ENCODE measurements at regions of chr17 and their contacts with region 1.

Region 1: GRCh38 chr17:63966646-63967264 is 6.0 kb downstream of the SCN4A start:
- DNase-seq: no peak
- H3K4me3 ChIP-seq: no peak overlapping the region
- H3K27ac ChIP-seq: no peak overlapping the region
- H3K4me1 ChIP-seq: no peaks in the 10 kb centered on the region
- H3K27me3 ChIP-seq: no peaks in the 10 kb centered on the region
- CTCF ChIP-seq: no peak

Region 2: DNA sequence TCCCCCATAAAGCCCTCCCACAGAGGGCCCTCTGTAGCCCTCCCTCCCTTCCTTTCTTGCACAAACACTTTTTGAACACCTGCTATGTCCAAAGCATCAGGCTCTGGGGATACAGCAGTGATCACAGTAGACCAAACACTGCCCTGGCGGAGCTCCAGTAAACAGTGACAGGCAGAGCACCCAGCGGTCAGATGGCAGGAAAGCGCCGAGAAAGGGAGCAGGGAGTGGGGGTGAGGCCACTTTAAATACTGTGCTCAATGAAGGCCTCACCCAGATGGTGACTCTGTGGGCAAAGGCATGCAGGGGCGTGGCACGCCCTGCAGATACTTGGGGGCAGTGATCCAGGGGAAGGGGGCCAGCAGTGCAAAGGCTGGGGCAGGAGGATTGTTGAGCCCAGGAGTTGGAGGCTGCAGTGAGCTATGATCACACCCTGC is 39.0 kb after region 1 on chr17:
- CTCF ChIA-PET with region 1: no interaction called
- POLR2A ChIA-PET with region 1: no interaction called
- intact Hi-C with region 1: no loop called
- DNase-seq: peak; percentile 66 to 72
- H3K4me3 ChIP-seq: no peak overlapping the region
- H3K27ac ChIP-seq: 0 out of 2 replicates have a peak overlapping the region, but pooled peaks have one; percentile 11
- H3K4me1 ChIP-seq: peaks cover 65% of the 10 kb centered on the region
- H3K27me3 ChIP-seq: no peaks in the 10 kb centered on the region
- CTCF ChIP-seq: no peak

Region 3: DNA sequence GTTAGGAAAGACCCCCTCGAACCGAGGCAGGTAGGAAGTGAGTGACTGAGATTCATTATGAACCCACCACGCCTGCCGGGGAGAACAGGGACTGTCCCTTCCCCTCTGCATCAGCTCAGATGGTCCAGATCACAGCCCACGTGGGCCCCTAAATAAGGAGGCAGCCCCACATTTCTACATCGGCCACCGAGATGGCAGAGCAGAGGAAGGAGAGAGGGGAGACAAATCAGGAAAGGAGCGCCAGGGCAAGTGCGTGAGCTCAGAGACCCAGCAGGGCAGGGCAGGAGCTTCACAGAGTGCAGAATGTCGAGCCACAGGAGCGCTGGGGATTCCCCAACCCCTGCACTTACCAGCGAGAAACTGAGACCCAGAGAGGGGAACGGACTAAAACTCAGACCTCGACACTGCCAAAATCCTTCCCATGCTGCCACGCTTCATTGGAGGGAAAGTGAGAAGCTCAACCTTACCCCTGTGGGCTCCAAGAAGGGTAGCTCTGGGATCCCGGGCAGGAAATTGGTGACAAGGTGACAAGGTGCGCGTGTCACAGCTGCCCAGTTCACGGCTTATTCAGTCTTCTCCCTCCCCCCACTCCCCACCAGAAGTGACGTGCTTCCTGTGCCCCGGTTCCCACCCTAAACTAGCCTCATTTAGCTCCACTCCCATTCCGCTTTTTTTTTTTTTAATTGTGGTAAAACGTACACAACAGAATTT is 53.5 kb after region 1 on chr17 and contains the start of gene ICAM2:
- CTCF ChIA-PET with region 1: interaction called, 24 read pairs
- POLR2A ChIA-PET with region 1: interaction called, 8 read pairs
- intact Hi-C with region 1: no loop called
- DNase-seq: no peak
- H3K4me3 ChIP-seq: no peak within 1 kb of the TSS
- H3K27ac ChIP-seq: no peak within 1 kb of the TSS
- H3K4me1 ChIP-seq: no peaks in the 10 kb centered on the region
- H3K27me3 ChIP-seq: no peaks in the 10 kb centered on the region
- CTCF ChIP-seq: no peak
- total RNA-seq, gene ICAM2: 7.8 and 9.2 TPM in 2 replicates